ENCODE measurements at regions of chr12 and their contacts with region 1.

Region 1: DNA sequence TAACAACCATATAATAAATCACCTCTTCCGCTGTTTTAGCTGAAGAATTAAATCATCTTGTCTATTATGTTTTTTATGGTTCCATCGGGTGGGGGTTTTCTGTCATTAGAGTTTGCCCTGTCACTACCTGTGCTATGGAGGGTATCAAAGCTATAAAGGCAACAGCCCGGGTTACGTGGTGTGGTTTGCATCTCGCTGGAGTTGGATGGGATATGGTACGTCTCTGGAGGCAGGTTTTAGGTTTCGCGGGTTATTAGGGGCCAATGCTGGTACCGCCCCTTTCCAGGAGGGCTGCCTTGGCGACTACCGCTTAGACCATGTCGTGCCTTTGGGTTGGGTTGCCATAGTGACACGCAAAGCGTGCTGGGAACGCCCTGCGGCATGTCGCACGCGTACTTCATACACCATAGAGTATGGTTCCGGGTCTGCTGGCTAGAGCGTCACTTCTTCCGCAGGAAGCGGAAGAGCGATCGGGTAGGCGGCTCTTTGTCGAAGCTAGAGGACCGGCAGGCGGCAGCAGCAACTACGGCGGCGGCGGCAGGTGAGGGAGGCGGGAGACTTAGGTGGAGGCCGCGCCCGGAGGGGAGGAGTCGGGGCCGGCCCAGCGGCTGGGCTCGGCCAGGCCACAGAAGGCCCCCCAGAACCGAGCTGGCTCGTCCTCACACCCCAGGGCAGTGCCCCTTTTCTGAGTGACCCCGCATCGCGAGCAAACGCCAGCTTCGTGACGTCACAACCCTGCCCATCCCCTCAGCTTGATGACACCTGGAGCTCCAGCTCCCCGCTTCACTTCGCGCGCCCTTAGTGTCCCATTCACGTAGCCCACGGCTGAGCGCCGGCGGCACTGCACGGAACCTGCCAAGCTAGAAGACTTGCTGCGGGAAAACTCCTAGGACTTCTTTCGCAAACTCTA is at the start of gene ZC3H10:
- DNase-seq: peak; percentile 98
- ATAC-seq: peak; percentile 75
- H3K4me3 Mint-ChIP-seq: peak within 1 kb of the TSS; percentile 100
- H3K27ac Mint-ChIP-seq: peak within 1 kb of the TSS; percentile 100
- H3K4me1 Mint-ChIP-seq: peaks cover 21% of the 10 kb centered on the region
- H3K27me3 Mint-ChIP-seq: no peaks in the 10 kb centered on the region
- CTCF ChIP-seq: no peak
- total RNA-seq, gene ZC3H10: 11.3 to 13.6 TPM (median 13.1 TPM) in 3 replicates

Region 2: GRCh38 chr12:55955800-55956508 is 162.1 kb before region 1 on chr12:
- CTCF ChIA-PET with region 1: no interaction called
- POLR2A ChIA-PET with region 1: no interaction called
- DNase-seq: no peak
- ATAC-seq: peak; percentile 58
- H3K4me3 Mint-ChIP-seq: no peak overlapping the region
- H3K27ac Mint-ChIP-seq: no peak overlapping the region
- H3K4me1 Mint-ChIP-seq: no peaks in the 10 kb centered on the region
- H3K27me3 Mint-ChIP-seq: no peaks in the 10 kb centered on the region
- CTCF ChIP-seq: no peak

Region 3: DNA sequence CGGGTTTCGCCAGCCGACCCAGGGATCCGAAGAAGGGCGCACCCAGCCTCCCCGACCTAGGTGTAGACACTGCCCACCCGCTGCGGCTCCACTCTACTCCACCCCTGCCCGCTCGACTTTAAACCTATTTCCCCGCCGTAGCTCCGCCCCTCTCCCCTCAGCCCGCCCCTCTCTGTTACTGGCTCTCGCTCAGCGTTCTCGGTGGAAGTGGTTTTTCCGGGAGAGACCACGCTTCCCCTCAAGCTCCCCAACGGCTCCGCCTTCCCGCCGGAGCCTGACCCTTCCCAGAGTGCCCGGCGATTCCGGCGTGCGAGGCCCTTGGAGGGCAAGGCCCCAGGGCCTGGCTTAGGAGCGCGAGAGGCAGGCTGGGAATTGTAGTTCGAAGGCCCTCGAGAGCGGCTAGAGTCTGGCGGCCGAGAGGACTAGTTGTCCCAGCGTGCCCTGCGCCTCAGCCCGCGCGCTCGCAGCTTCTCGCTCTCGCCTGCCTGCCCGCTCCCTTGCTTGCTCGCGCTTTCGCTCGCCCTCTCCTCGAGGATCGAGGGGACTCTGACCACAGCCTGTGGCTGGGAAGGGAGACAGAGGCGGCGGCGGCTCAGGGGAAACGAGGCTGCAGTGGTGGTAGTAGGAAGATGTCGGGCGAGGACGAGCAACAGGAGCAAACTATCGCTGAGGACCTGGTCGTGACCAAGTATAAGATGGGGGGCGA is 13.8 kb before region 1 on chr12 and contains the start of gene PA2G4:
- CTCF ChIA-PET with region 1: interaction called, 24 read pairs
- POLR2A ChIA-PET with region 1: interaction called, 22 read pairs
- DNase-seq: peak; percentile 98
- ATAC-seq: peak; percentile 98
- H3K4me3 Mint-ChIP-seq: peak within 1 kb of the TSS; percentile 90
- H3K27ac Mint-ChIP-seq: peak within 1 kb of the TSS; percentile 99
- H3K4me1 Mint-ChIP-seq: peaks cover 24% of the 10 kb centered on the region
- H3K27me3 Mint-ChIP-seq: no peaks in the 10 kb centered on the region
- CTCF ChIP-seq: no peak
- total RNA-seq, gene PA2G4: 198 to 249 TPM (median 199 TPM) in 3 replicates

Region 4: GRCh38 chr12:56152318-56153033 is 34.4 kb after region 1 on chr12 and contains the start of gene MYL6B:
- CTCF ChIA-PET with region 1: interaction called, 23 read pairs
- POLR2A ChIA-PET with region 1: interaction called, 7 read pairs
- DNase-seq: peak; percentile 91
- ATAC-seq: peak; percentile 79
- H3K4me3 Mint-ChIP-seq: peak within 1 kb of the TSS; percentile 93
- H3K27ac Mint-ChIP-seq: peak within 1 kb of the TSS; percentile 88
- H3K4me1 Mint-ChIP-seq: peaks cover 18% of the 10 kb centered on the region
- H3K27me3 Mint-ChIP-seq: no peaks in the 10 kb centered on the region
- CTCF ChIP-seq: no peak
- total RNA-seq, gene MYL6B: 171 to 180 TPM (median 173 TPM) in 3 replicates

Region 5: GRCh38 chr12:56158029-56158925 is 40.2 kb after region 1 on chr12 and contains the start of gene MYL6:
- CTCF ChIA-PET with region 1: interaction called, 20 read pairs
- POLR2A ChIA-PET with region 1: interaction called, 35 read pairs
- DNase-seq: peak; percentile 93
- ATAC-seq: peak; percentile 65
- H3K4me3 Mint-ChIP-seq: peak within 1 kb of the TSS; percentile 96
- H3K27ac Mint-ChIP-seq: peak within 1 kb of the TSS; percentile 99
- H3K4me1 Mint-ChIP-seq: peaks cover 49% of the 10 kb centered on the region
- H3K27me3 Mint-ChIP-seq: no peaks in the 10 kb centered on the region
- CTCF ChIP-seq: no peak; the same call in 1 of the 2 replicates
- total RNA-seq, gene MYL6: 835 to 932 TPM (median 844 TPM) in 3 replicates

Measured in WTC11 (cell line).